ENCODE measurements at regions of chr2 and their contacts with region 1.

Region 1: DNA sequence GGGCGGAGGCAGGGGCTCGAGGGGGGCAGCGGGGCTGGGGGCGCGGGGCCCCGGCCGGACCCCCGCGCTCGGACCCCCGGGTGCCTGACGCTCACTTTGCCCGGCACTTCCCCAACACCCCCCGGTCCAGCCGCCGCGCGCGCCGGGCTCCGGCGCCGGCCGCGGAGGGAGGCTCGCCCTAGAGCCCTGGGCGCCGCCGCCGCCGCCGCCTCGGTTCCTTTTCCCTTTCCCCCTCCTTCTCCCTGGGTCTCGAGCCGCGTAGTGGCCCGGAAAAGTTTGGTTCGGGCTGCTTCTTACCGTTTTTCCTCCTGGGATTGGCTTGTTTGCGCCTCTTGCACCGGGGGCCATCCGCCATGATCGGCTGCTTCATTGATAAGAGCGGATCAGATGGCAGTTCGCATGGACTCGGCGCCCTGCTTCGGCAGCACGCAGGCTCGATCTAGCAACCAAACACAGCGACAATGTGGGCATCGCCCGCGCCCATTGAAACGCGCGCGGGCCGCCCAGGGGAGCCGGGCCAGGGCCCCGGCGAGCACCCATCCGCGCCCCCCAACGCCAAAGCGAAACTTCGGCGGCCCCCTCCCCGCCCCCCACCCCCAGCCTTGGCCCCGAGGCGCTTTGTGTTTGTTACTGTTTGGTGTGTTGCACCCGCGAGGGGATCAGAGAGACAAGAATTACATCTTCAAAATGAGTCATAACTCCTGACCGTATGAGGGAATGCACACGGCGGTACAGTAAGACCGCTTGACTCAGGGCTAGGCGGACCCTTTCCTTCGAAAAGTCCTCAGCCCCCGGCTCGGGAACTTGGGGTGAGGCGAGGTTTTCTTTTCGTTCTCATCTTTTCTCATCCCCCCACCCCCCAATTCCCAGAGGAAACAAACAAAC is 2.7 kb downstream of the ZEB2 start:
- DNase-seq: peak; percentile 44
- H3K4me3 Mint-ChIP-seq: no peak overlapping the region
- H3K27ac Mint-ChIP-seq: peak overlapping the region; percentile 100
- H3K4me1 Mint-ChIP-seq: peaks cover 25% of the 10 kb centered on the region
- H3K27me3 Mint-ChIP-seq: peaks cover 43% of the 10 kb centered on the region

Region 2: GRCh38 chr2:143468341-143468888 is 1048.8 kb before region 1 on chr2:
- intact Hi-C with region 1: loop called (anchors 2 kb)
- DNase-seq: no peak
- H3K4me3 Mint-ChIP-seq: peak overlapping the region; percentile 11
- H3K27ac Mint-ChIP-seq: peak overlapping the region; percentile 81
- H3K4me1 Mint-ChIP-seq: peaks cover 48% of the 10 kb centered on the region
- H3K27me3 Mint-ChIP-seq: no peaks in the 10 kb centered on the region

Region 3: GRCh38 chr2:144183727-144184126 is 333.5 kb before region 1 on chr2:
- intact Hi-C with region 1: loop called (anchors 2 kb)
- DNase-seq: peak; percentile 74
- H3K4me3 Mint-ChIP-seq: peak overlapping the region; percentile 50
- H3K27ac Mint-ChIP-seq: peak overlapping the region; percentile 89
- H3K4me1 Mint-ChIP-seq: peaks cover 37% of the 10 kb centered on the region
- H3K27me3 Mint-ChIP-seq: no peaks in the 10 kb centered on the region

Region 4: DNA sequence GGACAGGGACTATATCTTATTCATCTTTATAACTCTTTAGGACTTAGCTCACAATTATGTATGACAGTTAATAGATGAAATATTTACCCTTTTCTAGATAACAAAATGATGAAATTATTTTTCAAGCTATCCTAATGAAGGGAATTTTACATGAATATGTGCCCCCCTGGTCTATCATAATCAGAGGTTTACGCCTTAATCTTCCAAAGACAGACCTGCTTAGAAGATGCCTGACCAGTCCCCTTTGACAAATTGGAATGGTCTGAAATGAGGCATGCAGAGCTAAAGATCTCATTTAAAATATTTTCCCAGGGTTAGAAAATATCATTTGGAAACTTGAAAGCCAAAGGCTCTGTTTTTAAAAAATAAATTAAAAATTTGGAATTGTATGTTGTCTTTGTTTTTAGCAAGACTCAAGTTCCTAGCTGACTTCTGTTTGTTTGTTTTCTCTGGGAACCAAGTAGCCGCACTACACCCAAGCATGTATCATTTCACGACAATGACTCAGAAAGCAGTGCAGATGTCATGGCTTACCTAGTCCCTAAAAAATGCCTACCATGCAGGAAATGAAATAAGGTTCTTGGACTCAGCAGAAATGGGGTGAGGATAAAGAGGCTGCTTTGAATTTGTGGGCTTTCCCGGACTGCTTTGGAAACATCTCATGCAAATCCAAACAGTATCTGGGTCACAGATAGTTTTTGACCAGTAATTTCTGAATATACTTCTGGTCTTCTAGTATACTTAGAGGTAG is 159.4 kb before region 1 on chr2:
- intact Hi-C with region 1: loop called (anchors 1 kb)
- DNase-seq: peak; percentile 13
- H3K4me3 Mint-ChIP-seq: no peak overlapping the region
- H3K27ac Mint-ChIP-seq: peak overlapping the region; percentile 71
- H3K4me1 Mint-ChIP-seq: peaks cover 30% of the 10 kb centered on the region
- H3K27me3 Mint-ChIP-seq: no peaks in the 10 kb centered on the region

Region 5: DNA sequence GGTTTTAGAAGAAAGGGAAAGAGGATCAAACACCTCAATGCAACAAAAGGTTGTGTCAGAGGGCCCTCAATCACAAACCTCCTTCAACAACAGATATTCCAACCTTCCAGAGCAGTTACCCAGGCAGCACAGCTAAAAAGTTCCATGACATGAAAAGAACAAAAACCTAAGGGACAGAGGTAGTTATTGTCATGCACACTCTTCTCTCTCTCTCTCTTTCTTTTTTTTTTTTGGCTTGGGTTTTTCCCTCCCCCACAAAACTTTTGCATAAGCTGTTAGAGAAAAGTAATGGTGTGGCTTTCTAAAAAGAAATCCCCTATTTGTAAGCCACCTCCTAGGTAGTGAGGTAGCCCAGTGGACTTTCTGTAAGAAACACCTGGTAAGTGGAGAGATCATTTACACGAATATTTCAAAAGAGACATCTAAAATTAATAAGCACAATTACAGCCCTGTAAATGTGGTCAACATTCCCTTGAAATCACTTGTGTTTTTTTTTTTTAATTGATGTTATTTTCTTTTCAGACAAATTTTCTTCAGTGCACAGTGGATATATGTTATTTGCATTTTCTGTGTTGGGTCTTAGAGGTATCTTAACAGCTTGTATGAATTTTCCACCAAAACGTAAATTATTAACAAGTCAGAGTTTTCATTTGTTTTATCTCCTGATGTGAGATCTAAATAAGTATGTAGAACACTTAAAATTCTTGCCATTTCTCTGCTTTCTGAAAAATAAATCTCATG is 45.7 kb before region 1 on chr2:
- intact Hi-C with region 1: loop called (anchors 2 kb)
- DNase-seq: no peak
- H3K4me3 Mint-ChIP-seq: no peak overlapping the region
- H3K27ac Mint-ChIP-seq: peak overlapping the region; percentile 15
- H3K4me1 Mint-ChIP-seq: peaks cover 20% of the 10 kb centered on the region
- H3K27me3 Mint-ChIP-seq: no peaks in the 10 kb centered on the region

Region 6: DNA sequence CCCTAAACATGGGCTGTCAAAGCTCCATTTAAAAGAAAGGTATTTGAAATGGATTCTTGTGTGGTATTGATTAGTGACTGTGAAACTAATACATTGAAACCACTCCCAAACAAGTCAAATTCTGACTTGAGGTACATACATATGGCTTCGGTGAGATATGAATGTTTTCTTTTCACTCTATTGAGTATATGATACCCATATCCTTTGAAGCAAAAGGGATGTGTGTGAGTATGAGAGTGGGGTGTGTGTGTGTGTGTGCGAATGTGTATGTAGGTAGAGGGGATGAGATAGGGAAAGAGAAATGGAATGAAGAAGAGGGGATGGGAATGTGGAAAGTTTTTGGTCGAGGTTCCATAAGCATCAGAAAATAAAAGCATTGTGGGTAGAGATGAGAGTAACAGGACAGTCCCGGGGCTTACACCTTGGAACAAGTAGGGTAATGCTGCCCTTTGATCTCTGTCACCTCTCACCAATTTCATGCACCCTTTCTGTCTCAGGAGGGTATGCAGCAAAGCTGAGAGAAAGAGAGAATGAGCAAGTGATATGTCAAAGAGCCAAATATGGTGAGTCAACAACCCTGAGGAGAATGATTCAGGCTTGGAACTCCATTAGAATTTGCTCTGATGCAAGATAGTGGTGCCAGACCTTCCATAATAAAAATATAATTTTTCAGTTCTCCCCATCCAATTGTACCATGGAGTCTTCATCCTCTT is 66.7 kb after region 1 on chr2:
- intact Hi-C with region 1: loop called (anchors 5 kb)
- DNase-seq: no peak
- H3K4me3 Mint-ChIP-seq: no peak overlapping the region
- H3K27ac Mint-ChIP-seq: no peak overlapping the region
- H3K4me1 Mint-ChIP-seq: no peaks in the 10 kb centered on the region
- H3K27me3 Mint-ChIP-seq: peaks cover 7% of the 10 kb centered on the region

Region 7: DNA sequence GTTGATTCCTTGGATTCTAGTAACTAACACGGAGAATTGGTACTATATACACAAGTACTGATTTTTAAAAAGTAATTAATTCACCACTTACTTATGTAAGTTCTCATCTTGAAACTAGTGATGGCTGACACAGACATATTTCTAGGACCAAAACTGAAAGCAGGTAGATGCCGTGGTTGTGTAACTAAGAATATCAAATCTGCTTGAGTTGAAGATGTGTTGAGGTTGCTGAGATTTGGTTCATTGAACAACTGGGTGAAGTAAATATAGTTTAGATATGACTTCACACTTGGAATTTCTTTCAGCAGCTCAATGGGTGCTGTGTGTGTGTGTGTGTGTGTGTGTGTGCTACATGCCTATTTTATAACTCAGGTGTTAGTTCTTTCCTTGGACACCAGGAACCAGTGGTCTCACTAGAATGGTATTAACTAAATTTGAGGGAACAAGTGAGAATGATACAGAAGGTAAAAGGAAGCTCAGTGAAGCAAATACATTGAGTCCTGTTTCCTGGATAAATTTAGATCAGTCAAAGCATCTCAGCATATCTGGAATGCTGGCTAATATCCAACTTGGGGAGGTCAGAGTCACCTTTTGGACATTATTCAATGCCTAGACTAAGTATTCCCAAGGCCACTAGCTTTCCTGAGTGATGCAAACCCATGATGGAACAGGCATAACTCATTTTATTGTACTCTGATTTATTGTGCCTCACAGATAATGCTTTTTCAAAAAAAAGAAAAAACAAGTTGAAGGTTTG is 113.4 kb after region 1 on chr2:
- intact Hi-C with region 1: no loop called
- DNase-seq: no peak
- H3K4me3 Mint-ChIP-seq: no peak overlapping the region
- H3K27ac Mint-ChIP-seq: no peak overlapping the region
- H3K4me1 Mint-ChIP-seq: no peaks in the 10 kb centered on the region
- H3K27me3 Mint-ChIP-seq: peaks cover 2% of the 10 kb centered on the region